IMR-90 (cell line): ENCODE measurements at regions of chr11 and their contacts with region 1.

Region 1: GRCh38 chr11:73982969-73983740 is 512 bp upstream of the UCP2 start:
- DNase-seq: peak; percentile 85
- ATAC-seq: peak; percentile 93
- H3K4me3 ChIP-seq: peak overlapping the region; percentile 58
- H3K27ac ChIP-seq: peak overlapping the region; percentile 29
- H3K4me1 ChIP-seq: no peaks in the 10 kb centered on the region; the same call in 1 of the 2 replicates
- H3K27me3 ChIP-seq: no peaks in the 10 kb centered on the region
- CTCF ChIP-seq: no peak
- POLR2A ChIP-seq: peak; percentile 43; the same call in 1 of the 2 replicates
- RAD21 ChIP-seq: no peak

Region 2: DNA sequence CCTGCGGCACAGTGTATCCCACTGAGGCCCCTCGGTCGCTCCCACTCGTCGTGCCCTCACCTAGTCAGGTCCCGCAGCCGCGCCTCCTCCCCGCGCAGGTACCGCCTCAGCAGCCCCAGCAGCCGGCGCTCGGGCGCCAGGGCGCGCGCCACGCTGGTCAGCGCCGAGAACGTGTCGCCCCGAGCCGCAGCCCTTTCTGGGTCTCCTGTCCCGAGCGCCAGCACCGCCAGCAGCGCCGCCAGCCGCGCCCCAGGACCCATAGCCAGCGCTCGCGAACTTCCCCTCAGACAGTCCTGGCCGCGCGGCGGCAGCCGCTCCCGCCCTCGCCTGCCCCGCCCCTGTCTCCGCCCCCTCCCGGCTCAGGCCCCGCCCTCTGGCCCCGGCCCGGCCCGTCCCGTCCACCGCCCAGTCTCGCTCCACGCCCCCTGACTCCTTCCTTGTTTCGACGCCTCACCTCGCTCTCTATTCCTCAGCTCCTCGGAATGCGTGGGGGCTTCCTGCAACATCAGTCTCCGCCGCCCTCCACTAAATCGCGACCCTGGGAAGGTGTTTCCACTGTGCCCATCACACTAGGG is 328.3 kb after region 1 on chr11 and contains the start of gene P4HA3:
- CTCF ChIA-PET with region 1: no interaction called
- POLR2A ChIA-PET with region 1: no interaction called
- dilution Hi-C with region 1: no loop called
- in situ Hi-C with region 1: no loop called
- intact Hi-C with region 1: loop called (anchors 10 kb)
- DNase-seq: peak; percentile 28
- ATAC-seq: peak; percentile 99
- H3K4me3 ChIP-seq: peak within 1 kb of the TSS; percentile 73
- H3K27ac ChIP-seq: peak within 1 kb of the TSS; percentile 18; the same call in 1 of the 2 replicates
- H3K4me1 ChIP-seq: peaks cover 11% of the 10 kb centered on the region
- H3K27me3 ChIP-seq: no peaks in the 10 kb centered on the region
- CTCF ChIP-seq: peak; percentile 23; the same call in 1 of the 2 replicates
- POLR2A ChIP-seq: no peak
- RAD21 ChIP-seq: 0 out of 2 replicates have a peak, but pooled peaks have one; percentile 11
- total RNA-seq, gene P4HA3: 2.8 and 2.9 TPM in 2 replicates